ENCODE measurements at regions of chr1 and their contacts with region 1.

Region 1: DNA sequence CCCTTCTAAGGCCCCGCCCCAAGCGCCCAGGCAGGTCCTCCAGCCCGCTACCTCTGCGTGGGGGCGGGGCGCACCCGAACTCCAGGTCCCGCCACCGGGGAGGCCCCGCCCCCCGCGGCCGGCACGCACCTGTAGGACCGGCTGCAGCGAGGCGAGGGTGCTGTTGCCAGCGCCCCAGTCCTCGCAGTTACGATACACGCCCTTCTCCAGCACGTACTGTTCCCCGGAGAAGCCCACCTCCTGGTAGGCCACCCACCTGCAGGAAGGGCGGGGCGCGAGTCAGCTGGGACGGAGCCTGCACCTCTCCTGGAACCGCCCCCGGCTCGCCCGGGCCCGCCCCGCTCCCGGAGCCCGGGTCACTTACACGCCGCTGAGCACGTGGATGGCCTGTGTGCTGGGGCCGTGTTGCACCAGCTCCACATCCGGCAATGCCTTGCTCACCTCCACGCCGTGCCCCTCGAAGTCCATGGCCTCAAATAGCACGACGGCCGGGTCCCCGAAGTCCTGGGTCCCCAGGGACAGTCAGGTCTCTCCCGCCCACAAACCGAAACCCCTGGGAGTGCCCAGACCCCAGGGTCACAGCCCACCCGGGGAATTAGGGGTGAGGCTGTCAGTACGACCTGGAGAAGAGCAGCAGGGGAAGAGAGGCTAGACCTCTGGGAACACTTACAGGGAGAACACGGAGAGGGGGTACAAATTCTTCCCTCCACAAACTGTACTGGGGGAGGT is 17.3 kb downstream of the CRYBG2 start:
- DNase-seq: peak; percentile 67 to 91 (median 86)
- ATAC-seq: peak; percentile 86
- H3K4me3 ChIP-seq: peak overlapping the region; percentile 65 to 89
- H3K4me3 Mint-ChIP-seq: peak overlapping the region; percentile 87
- H3K27ac ChIP-seq: no peak overlapping the region
- H3K27ac Mint-ChIP-seq: no peak overlapping the region
- H3K4me1 ChIP-seq: peaks cover 18% of the 10 kb centered on the region
- H3K4me1 Mint-ChIP-seq: peaks cover 13% of the 10 kb centered on the region
- H3K27me3 ChIP-seq: no peaks in the 10 kb centered on the region
- H3K27me3 Mint-ChIP-seq: no peaks in the 10 kb centered on the region
- CTCF ChIP-seq: no peak

Region 2: GRCh38 chr1:26358411-26359384 is 22.1 kb after region 1 on chr1:
- CTCF ChIA-PET with region 1: interaction called, 8 read pairs
- POLR2A ChIA-PET with region 1: interaction called, 3 read pairs
- intact Hi-C with region 1: loop called (anchors 1 to 2 kb)
- DNase-seq: peak; percentile 52 to 90 (median 72)
- ATAC-seq: peak; percentile 81
- H3K4me3 ChIP-seq: no peak overlapping the region
- H3K4me3 Mint-ChIP-seq: peak overlapping the region; percentile 42
- H3K27ac ChIP-seq: no peak overlapping the region
- H3K27ac Mint-ChIP-seq: peak overlapping the region; percentile 84
- H3K4me1 ChIP-seq: peaks cover 36% of the 10 kb centered on the region
- H3K4me1 Mint-ChIP-seq: peaks cover 40% of the 10 kb centered on the region
- H3K27me3 ChIP-seq: peaks cover 0 to 18% of the 10 kb centered on the region in 2 experiments
- H3K27me3 Mint-ChIP-seq: peaks cover 13% of the 10 kb centered on the region
- CTCF ChIP-seq: no peak

Region 3: DNA sequence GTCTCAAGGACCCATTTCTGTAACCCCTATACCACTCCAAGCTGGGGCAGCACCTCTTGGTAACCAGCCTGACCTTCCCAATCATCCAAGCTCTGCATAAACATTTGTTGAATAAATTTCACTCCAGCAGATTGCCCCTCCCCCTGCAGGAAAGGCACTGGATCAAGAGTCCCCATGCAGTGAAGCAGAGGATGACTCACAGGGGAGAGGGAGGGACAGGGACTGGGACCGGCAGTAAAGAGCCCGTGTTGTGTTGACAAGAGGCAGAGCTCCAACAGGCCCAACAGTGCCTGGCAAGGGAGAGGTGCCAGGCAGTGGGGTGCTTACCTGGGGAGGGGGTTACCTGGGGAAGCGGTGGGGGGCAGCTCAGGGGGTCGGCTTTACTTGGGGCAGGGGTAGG is 786.0 kb after region 1 on chr1:
- CTCF ChIA-PET with region 1: no interaction called
- POLR2A ChIA-PET with region 1: no interaction called
- intact Hi-C with region 1: no loop called
- DNase-seq: no peak
- ATAC-seq: no peak
- H3K4me3 ChIP-seq: no peak overlapping the region
- H3K4me3 Mint-ChIP-seq: no peak overlapping the region
- H3K27ac ChIP-seq: no peak overlapping the region
- H3K27ac Mint-ChIP-seq: no peak overlapping the region
- H3K4me1 ChIP-seq: no peaks in the 10 kb centered on the region
- H3K4me1 Mint-ChIP-seq: peaks cover 9% of the 10 kb centered on the region
- H3K27me3 ChIP-seq: no peaks in the 10 kb centered on the region
- H3K27me3 Mint-ChIP-seq: no peaks in the 10 kb centered on the region
- CTCF ChIP-seq: no peak